Mammary epithelial cell (primary cell): ENCODE measurements at regions of chr10 and their contacts with region 1.

Region 1: GRCh38 chr10:123759501-123760031 is 93.4 kb downstream of the GPR26 start:
- DNase-seq: no peak
- H3K4me3 ChIP-seq: no peak overlapping the region
- H3K27ac ChIP-seq: no peak overlapping the region
- H3K4me1 ChIP-seq: peaks cover 11% of the 10 kb centered on the region
- H3K27me3 ChIP-seq: no peaks in the 10 kb centered on the region
- CTCF ChIP-seq: no peak

Region 2: DNA sequence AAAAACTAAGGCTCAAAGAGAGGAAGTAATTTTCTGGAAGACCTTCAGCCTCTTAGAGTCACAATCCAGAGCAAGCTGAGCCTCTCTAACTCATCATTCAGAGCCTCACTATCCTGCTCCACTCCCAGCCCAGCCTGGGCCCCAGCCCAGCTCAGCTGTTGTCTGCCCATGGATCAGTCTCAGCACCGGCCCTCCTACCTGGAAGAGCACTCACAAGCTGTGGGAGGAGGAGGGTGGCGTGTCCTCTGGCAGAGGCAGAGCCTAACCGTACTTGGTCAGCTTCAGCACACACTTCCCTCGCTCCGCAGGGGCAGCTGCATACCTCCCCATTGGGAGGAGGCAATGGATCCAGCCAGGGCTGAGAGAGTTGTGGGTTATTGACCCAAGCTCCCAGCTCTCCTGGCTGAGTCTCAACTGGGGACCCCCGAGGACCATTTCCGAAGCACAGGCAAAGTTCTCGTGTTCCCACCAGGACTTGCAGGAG is 160.2 kb before region 1 on chr10:
- CTCF ChIA-PET with region 1: no interaction called
- dilution Hi-C with region 1: loop called (anchors 10 kb)
- in situ Hi-C with region 1: no loop called
- intact Hi-C with region 1: no loop called
- DNase-seq: no peak
- H3K4me3 ChIP-seq: no peak overlapping the region
- H3K27ac ChIP-seq: no peak overlapping the region
- H3K4me1 ChIP-seq: no peaks in the 10 kb centered on the region
- H3K27me3 ChIP-seq: no peaks in the 10 kb centered on the region
- CTCF ChIP-seq: no peak

Region 3: DNA sequence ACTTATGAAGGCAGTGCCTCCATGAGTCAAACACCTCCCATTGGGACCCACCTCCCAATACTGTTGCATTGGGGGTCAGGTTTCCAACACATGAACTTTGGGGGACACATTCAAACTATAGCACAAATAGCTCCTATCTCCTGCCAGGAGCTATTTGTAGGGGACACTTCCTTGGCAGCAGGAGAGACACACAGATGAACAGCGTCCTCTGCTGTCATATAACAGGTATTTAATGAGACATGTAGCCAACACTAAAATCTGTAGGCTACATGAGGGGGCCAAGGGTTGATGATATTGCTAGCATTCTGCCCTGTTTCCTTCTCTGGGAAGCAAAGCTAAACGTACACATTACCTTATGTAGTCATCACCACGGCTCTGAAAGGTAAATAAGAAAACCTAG is 96.0 kb before region 1 on chr10:
- CTCF ChIA-PET with region 1: no interaction called
- dilution Hi-C with region 1: loop called (anchors 5 kb)
- in situ Hi-C with region 1: no loop called
- intact Hi-C with region 1: no loop called
- DNase-seq: no peak
- H3K4me3 ChIP-seq: no peak overlapping the region
- H3K27ac ChIP-seq: no peak overlapping the region
- H3K4me1 ChIP-seq: no peaks in the 10 kb centered on the region
- H3K27me3 ChIP-seq: peaks cover 27% of the 10 kb centered on the region
- CTCF ChIP-seq: no peak

Region 4: DNA sequence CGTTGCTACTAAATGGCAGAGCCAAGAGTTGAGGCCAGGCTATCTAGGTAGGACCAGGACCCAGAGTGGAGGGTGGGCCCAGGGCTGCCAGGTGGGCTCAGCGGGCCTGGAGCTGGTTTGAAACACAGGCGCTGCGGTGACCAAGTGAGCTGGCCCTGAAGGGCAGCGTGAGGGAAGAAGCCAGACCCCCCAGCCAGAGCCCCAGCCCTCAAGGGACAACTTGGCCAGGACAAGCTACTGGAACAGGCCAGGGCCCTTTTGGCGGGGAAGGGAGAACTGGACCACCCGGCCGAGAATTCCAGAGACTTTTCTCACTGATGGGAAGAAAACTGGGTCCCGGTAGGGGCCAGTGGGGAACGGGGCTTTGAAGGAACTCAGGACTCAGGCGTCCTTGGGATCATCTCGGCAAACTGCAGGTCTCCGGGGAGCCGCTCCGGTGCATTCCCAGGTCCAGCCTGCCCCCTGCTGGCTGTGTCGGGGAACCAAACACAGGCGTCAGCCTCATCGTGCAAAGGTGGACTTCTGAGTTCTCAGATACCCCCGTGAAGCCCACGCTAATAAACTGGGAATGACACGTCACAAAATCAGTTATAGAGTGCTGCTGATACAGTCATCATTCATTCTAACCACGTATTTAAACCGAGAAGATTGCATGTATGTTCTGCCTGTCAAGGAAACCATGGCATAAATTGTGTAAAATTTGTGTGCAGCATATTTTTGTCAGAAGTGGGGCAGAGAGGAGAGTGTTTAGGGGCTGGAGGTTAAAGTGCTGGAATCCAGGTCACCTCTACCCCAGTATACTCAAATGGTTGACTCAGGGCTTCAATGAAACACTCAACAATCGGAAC is 208.1 kb after region 1 on chr10:
- CTCF ChIA-PET with region 1: no interaction called
- dilution Hi-C with region 1: no loop called
- in situ Hi-C with region 1: no loop called
- intact Hi-C with region 1: loop called (anchors 5 kb)
- DNase-seq: peak; percentile 16
- H3K4me3 ChIP-seq: no peak overlapping the region
- H3K27ac ChIP-seq: no peak overlapping the region
- H3K4me1 ChIP-seq: no peaks in the 10 kb centered on the region
- H3K27me3 ChIP-seq: peaks cover 5% of the 10 kb centered on the region
- CTCF ChIP-seq: peak; percentile 80 to 97